ENCODE measurements at regions of chr18 and their contacts with region 1.

Region 1: DNA sequence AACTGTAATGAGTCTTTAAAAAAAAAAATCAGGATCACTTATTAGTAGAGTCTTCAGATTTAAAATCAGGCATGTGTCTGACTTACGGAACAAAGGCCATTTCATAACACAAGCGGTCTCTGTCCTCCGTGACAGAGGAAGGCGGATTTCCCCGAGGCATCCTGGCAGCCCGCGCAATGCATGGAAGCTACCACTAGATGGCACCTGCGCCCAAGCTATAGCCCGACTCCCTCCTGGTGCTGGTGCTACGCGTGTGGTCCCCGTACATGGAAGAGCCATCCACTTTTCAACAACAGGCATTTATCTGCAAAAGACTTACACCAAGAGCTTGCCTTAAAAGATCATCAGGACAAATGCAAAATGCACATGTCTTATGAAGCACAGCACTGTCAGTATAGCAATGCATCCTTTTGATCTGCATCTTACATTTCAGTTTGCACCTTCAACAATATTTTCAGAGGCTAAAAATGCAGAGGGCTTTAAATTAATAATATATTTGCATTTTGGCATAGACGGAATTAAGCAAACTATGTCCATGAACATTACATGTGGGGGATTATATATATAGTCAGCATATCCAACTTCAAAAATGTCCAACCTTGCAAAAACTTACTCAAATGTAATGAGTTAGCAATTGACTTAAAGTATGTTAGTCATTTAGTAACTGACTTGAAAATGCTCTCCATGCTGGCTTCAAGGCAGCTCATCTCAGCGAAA is 96.0 kb downstream of the ZNF516 start:
- DNase-seq: peak; percentile 49
- H3K4me3 ChIP-seq: no peak overlapping the region
- H3K27ac ChIP-seq: no peak overlapping the region
- H3K27me3 ChIP-seq: no peaks in the 10 kb centered on the region
- CTCF ChIP-seq: peak; percentile 99

Region 2: DNA sequence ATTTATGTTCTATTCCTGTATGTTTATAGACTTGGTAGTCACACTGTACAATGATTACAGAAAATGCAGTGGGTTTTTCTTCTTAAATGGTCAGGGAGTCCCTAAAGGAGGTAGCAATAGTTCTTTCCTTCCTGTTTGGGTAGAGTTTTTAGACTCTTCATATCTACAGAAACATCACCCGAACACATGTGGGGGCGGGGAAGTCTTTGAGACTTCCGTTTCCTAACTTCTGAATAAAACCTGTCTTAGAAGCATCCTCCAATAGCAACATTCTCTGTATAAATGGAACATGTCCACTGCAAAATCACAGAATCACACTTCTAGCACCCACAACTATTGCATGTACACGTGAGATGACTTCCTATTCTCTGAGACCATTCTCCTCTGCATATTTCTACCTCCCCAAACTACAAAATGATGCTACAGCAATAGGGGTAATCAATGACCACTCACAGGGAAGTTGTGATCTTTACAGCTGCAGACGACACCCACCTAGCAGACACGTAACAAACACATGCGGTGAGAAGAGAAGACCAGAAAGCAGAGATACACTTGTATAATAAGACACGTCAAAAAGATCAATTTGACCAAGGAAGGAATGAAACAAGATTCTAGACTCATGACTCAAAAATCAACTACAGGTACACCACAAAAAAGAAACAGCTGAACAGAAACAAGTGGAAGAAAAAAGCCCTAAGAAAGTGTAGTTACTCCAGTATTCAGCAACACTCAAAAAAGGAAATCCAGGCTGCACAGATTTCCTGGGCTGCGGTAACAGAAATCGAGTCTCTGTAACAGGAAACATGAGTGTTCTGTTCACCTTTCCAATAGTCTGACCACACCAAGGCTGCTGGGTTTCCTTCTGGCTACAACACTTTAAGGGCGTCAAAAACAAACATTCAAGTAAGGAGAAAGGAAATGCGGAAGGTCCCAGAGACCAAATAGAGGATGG is 24.4 kb before region 1 on chr18:
- CTCF ChIA-PET with region 1: interaction called, 12 read pairs
- POLR2A ChIA-PET with region 1: no interaction called
- DNase-seq: no peak
- H3K4me3 ChIP-seq: no peak overlapping the region
- H3K27ac ChIP-seq: no peak overlapping the region
- H3K27me3 ChIP-seq: no peaks in the 10 kb centered on the region
- CTCF ChIP-seq: no peak

Region 3: GRCh38 chr18:76416911-76417310 is 17.9 kb after region 1 on chr18:
- CTCF ChIA-PET with region 1: interaction called, 10 read pairs
- POLR2A ChIA-PET with region 1: no interaction called
- DNase-seq: no peak
- H3K4me3 ChIP-seq: no peak overlapping the region
- H3K27ac ChIP-seq: no peak overlapping the region
- H3K27me3 ChIP-seq: no peaks in the 10 kb centered on the region
- CTCF ChIP-seq: no peak

Region 4: DNA sequence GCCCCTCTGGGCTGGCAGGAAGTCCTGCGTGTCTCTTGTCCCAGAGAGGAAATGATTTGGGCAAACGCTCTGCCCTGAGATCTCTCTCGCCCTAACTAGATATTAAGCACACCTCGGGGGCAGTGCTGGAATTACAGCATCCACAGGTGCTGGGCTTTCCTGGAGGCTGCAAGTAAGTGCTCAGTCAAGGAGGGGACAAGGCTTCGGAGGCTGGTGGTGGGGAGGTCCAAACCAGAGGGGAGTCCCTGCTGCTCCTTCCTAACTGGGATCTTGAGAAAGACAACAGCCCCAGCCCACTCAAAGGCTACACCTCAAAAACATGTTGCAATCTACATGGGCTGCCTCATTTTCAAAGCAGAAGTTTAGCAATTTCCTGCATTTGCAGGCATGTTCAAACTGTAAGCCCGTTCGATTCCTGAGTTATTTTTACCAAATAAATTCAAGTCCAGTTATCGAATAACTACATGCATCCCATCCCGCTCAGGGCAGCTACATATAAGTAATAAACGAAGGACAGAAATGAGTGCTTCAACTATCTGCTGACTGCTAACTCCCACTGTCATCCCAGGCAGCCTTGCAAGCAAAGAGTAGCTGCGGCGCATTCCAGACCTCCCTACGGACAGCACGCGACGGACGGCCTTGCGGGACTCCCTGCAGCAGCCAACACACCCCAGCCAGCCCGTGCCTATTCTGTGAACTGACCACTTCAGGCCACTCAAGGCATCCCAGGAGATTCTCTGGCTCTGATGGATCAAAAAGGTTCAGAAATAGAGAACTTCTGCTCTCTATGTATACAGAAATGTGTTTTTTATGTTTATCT is 68.5 kb after region 1 on chr18:
- CTCF ChIA-PET with region 1: no interaction called
- POLR2A ChIA-PET with region 1: no interaction called
- DNase-seq: no peak
- H3K4me3 ChIP-seq: no peak overlapping the region
- H3K27ac ChIP-seq: peak overlapping the region; percentile 21
- H3K27me3 ChIP-seq: no peaks in the 10 kb centered on the region
- CTCF ChIP-seq: no peak

Region 5: GRCh38 chr18:76686737-76687262 is 287.7 kb after region 1 on chr18:
- CTCF ChIA-PET with region 1: interaction called, 69 read pairs
- POLR2A ChIA-PET with region 1: no interaction called
- DNase-seq: peak; percentile 24
- H3K4me3 ChIP-seq: no peak overlapping the region
- H3K27ac ChIP-seq: no peak overlapping the region
- H3K27me3 ChIP-seq: peaks cover 33% of the 10 kb centered on the region
- CTCF ChIP-seq: peak; percentile 80

Region 6: DNA sequence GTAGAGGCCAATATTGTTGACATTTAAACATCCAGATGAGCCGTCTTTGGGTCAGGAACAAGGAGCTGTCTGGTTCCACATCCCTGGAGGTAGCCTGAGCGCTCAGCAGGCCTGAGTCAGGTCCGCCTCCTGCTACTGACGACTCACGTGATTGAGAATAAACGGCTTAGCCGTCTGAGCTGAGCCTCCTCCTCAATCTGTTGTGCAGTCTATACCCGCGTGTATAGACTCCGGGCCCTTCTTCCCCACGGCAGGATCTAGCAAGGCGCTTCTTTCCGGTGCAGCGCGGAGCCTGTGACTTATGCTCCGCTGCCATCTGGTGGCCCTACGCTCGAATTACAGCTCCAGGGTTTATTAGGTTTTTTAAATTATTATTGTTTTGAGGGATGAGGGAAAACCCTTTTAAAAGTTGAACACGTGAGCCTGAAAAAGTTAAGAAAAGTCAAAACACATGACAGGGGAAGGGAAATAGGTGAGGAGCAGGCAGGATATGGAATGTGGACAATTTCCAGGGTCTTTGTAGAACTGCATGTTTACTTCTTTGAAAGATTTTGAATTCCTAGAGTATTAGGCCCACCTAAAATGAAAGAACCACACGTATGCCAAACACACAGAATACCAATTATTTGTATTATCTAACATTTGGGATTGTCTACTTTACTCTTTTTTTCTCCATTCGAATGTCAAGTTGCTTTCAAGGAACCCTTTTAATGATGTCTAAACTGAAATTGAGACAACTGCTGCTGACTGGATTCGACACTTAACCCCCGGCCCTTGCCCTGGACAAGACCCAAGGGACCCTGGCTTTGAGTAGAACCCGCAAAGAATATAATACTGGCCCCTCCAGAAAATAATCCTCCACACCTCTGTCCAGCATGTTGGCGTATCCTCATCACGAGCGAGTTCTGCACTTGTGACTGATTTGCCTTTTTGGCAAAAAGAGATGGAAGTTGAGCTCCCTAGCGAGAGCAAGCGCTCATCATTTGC is 310.9 kb after region 1 on chr18:
- CTCF ChIA-PET with region 1: interaction called, 94 read pairs
- POLR2A ChIA-PET with region 1: no interaction called
- DNase-seq: peak; percentile 41
- H3K4me3 ChIP-seq: no peak overlapping the region
- H3K27ac ChIP-seq: no peak overlapping the region
- H3K27me3 ChIP-seq: peaks cover 5% of the 10 kb centered on the region
- CTCF ChIP-seq: peak; percentile 93

Measured in AG04450 (cell line).